ENCODE measurements at regions of chr1 and their contacts with region 1.

Region 1: GRCh38 chr1:54996359-54996868 is 2.3 kb upstream of the BSND start:
- DNase-seq: peak; percentile 58
- ATAC-seq: peak; percentile 82
- H3K4me3 ChIP-seq: no peak overlapping the region
- H3K27ac ChIP-seq: no peak overlapping the region
- H3K4me1 ChIP-seq: peaks cover 15% of the 10 kb centered on the region
- H3K27me3 ChIP-seq: peaks cover 0 to 50% of the 10 kb centered on the region in 2 experiments
- CTCF ChIP-seq: peak; percentile 95
- EP300 ChIP-seq: no peak
- POLR2A ChIP-seq: no peak
- RAD21 ChIP-seq: peak; percentile 91

Region 2: DNA sequence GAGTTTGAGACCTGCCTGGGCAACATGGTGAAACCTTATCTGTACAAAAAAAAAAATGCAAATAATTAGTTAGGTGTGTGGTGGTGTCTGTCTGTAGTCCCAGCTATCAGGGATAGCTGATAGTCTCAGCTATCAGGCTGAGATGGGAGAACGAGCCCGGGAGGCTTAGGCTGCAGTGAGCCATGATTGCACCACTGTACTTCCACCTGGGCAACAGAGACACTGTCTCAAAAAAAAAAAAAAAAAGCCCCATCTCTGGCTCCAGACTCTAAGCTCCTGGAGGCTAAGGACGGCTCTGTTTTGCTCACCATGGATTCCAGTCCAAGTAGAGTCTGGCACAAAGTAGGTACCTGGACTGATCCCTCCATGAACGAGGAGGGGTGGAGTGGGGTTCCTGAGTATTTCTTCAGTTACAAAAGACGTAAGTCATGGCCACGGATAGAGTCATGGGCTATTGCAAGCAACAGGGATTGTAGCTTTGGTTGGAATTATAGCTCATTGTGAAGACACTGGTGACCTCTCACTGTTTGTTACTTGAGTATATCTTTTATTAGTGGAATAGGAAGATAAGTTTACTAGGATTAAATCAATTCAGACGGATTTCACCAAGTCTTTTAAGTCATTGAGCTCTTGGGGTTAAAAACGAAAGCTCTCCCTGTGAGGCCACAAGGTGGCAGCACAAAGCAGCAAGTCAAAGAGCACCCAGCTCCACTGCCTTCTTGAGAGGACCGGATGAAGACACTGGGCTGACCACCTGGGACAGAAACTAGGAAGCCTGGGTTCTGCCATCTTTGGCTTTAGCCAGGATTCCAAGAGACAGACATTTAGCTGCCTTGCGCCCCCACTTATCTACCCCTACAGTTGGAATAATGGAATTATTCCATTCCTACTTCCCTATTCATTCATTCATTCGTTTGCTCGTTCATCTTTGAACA is 51.5 kb before region 1 on chr1:
- CTCF ChIA-PET with region 1: interaction called, 22 read pairs
- POLR2A ChIA-PET with region 1: no interaction called
- in situ Hi-C with region 1: loop called (anchors 5 kb)
- intact Hi-C with region 1: loop called (anchors 1 kb)
- DNase-seq: peak; percentile 70
- ATAC-seq: peak; percentile 82
- H3K4me3 ChIP-seq: peak overlapping the region; percentile 7 to 65 (median 56); a peak in 4 of 6 replicates
- H3K27ac ChIP-seq: no peak overlapping the region
- H3K4me1 ChIP-seq: peaks cover 21% of the 10 kb centered on the region
- H3K27me3 ChIP-seq: no peaks in the 10 kb centered on the region; a peak in 1 of 5 replicates
- CTCF ChIP-seq: peak; percentile 81
- EP300 ChIP-seq: no peak
- POLR2A ChIP-seq: no peak
- RAD21 ChIP-seq: peak; percentile 67

Region 3: DNA sequence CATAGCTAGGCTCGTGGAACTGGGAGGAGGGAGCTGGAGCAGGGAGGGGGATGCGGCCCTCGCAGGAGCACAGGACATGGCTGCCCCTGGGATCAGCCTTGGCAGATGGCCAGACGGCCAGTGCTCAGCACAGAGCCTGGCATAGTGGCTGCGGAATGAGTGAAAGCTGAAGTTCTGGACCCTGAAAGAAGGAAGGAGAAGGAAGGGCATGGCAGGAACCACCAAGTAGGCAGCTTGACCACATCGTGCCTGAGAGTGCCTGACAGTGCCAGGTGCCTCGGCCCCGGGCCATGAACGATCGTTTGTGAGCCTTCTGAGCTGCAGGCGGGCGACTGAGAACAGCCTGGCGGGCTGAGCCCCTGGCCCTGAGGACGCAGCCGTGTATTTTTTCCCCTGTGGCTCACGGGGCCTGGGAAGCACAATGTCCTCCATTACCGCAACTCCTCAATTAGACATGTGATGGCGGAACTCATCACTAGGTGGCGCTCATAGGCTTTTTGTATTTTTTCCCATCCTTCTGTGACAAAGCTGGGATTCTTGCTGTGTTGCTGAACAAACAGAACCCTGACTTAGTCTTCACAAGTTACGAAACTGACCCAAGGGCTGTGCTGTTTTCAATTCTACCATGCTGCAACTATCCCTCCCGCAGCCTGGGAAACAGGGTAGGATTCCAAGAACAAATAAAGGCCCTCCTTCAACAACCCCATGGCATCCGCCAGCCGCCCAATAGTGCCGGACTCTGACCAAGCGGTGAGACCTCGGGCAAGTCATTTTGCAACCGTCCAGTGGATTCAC is 45.8 kb before region 1 on chr1:
- CTCF ChIA-PET with region 1: interaction called, 22 read pairs
- POLR2A ChIA-PET with region 1: no interaction called
- in situ Hi-C with region 1: loop called (anchors 5 kb)
- intact Hi-C with region 1: loop called (anchors 1 kb)
- DNase-seq: peak; percentile 84
- ATAC-seq: peak; percentile 83
- H3K4me3 ChIP-seq: peak overlapping the region; percentile 33 to 70 (median 58); a peak in 5 of 6 replicates
- H3K27ac ChIP-seq: peak overlapping the region; percentile 13
- H3K4me1 ChIP-seq: peaks cover 43% of the 10 kb centered on the region
- H3K27me3 ChIP-seq: no peaks in the 10 kb centered on the region; a peak in 1 of 5 replicates
- CTCF ChIP-seq: peak; percentile 91
- EP300 ChIP-seq: no peak
- POLR2A ChIP-seq: no peak
- RAD21 ChIP-seq: peak; percentile 68

Measured in HepG2 (cell line).